Calu3 (cell line): ENCODE measurements at regions of chr18 and their contacts with region 1.

Region 1: GRCh38 chr18:51135795-51136194 is 61.7 kb downstream of the MEX3C start:
- DNase-seq: peak; percentile 25
- H3K4me3 Mint-ChIP-seq: no peak overlapping the region
- H3K27ac Mint-ChIP-seq: no peak overlapping the region
- H3K4me1 Mint-ChIP-seq: peaks cover 10% of the 10 kb centered on the region
- H3K27me3 Mint-ChIP-seq: no peaks in the 10 kb centered on the region
- CTCF ChIP-seq: peak; percentile 55

Region 2: DNA sequence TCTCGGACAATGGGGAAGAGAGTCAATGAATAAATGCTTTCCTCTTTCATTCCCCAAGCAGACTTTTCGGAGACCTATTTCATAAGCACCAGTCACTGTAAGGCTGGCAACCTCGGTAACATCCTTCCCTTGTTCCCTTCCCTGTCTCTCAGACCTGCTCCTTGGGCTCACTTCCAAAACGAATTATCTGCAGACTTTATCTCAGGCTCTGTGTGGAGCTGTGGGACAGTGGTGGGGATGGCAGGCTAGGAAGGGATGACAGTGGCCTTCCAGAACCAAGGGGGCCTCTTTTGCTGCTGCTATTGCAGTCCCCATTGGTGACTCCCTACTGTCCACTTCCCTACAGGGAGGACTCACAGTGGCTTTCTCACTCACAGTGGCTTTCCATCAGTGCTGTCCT is 247.3 kb after region 1 on chr18:
- CTCF ChIA-PET with region 1: no interaction called
- intact Hi-C with region 1: loop called (anchors 10 kb)
- DNase-seq: no peak
- H3K4me3 Mint-ChIP-seq: no peak overlapping the region
- H3K27ac Mint-ChIP-seq: no peak overlapping the region
- H3K4me1 Mint-ChIP-seq: no peaks in the 10 kb centered on the region
- H3K27me3 Mint-ChIP-seq: no peaks in the 10 kb centered on the region
- CTCF ChIP-seq: no peak